HEK293T (cell line): ENCODE measurements at regions of chr6 and their contacts with region 1.

Region 1: GRCh38 chr6:26156076-26156849 is 69.0 kb downstream of the HFE start:
- DNase-seq: peak; percentile 88

Region 2: DNA sequence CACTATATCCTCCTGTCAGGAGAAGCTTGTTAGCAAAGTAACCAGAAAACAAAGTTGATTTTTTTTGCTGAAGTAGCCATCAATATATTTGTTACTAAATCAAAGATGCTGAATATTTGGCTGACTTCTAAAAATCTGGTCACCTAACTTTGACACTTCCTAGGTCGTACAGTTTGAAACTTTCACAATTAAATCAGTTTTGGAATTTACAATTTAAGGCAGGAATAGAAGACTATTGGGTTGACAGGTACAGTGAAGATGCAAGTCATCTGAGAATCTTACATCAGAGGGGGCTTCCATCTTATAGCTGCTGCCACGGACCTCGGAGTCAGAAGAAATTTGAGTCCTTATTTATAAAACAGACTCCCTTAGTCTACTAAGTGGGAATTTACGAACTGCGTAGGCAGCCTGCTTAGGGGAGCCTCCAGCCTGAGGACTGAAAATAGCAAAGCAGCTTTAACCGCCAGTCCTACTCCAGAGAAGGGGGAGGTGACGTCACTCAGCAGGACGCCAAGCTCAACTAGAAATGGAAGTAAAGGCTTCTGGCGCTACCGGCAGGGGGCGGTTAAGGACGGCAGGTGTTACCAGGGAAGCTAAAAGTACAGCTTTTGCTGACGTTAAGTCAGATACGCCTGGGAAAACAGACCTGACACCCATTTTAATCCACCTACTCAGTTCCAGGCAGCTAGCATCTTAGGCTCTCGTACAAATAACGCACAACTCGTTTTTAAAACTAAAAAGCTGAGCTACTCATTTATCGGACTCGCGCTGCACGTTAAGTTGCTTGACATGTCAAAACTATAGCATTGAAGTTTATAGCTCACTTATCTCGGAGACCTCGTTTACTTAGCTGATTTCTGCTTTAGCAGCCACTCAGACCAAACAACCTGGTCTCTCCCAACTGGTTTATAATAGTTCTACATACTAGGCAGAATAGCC is 130.1 kb before region 1 on chr6:
- CTCF ChIA-PET with region 1: no interaction called
- POLR2A ChIA-PET with region 1: interaction called, 243 read pairs
- DNase-seq: peak; percentile 55

Region 3: DNA sequence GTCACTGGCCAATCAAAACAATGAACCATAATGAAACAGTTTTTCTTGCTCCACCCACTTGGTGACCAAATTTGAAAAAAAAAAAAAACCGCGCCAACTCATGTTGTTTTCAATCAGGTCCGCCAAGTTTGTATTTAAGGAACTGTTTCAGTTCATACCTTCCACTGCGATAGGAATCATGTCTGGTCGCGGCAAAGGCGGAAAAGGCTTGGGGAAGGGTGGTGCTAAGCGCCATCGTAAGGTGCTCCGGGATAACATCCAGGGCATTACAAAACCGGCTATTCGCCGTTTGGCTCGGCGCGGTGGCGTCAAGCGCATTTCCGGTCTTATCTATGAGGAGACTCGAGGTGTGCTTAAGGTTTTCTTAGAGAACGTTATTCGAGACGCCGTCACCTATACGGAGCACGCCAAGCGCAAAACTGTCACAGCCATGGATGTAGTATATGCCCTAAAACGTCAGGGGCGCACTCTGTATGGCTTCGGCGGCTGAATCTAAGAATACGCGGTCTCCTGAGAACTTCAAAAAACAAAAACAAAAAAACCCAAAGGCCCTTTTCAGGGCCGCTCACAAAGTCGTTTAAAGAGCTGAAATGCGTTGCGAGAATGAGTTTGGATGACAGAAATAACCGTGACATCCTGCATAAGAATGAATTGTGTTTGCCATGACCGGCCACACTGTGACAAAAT is 52.4 kb before region 1 on chr6:
- CTCF ChIA-PET with region 1: no interaction called
- POLR2A ChIA-PET with region 1: interaction called, 59 read pairs
- DNase-seq: peak; percentile 70

Region 4: GRCh38 chr6:26141378-26141904 is 14.8 kb before region 1 on chr6:
- CTCF ChIA-PET with region 1: no interaction called
- POLR2A ChIA-PET with region 1: interaction called, 47 read pairs
- DNase-seq: no peak

Region 5: GRCh38 chr6:26204332-26205165 is 48.3 kb after region 1 on chr6:
- CTCF ChIA-PET with region 1: no interaction called
- POLR2A ChIA-PET with region 1: interaction called, 121 read pairs
- DNase-seq: peak; percentile 86

Region 6: DNA sequence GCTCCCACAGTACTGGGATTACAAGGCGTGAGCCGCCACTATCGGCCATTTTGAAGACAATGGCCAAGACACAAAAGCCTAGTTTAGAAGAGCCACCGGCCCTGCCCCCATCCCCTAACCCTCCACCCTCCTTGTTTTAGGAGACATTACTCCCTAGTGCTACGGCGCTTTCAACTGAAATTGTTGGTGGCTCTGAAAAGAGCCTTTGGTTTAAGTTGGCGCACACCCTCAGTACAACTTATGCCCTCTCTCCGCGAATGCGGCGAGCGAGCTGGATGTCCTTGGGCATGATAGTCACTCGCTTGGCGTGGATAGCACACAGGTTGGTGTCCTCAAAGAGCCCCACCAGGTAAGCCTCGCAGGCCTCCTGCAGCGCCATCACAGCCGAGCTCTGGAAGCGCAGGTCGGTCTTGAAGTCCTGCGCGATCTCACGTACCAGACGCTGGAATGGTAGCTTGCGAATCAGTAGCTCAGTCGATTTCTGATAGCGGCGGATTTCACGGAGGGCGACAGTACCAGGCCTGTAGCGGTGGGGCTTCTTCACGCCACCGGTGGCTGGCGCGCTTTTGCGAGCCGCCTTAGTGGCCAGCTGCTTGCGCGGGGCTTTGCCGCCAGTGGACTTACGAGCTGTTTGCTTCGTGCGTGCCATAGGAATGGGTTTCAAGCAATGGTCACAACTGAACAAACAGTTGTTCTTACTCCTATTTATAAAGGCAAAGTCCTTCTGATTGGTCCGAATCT is 93.9 kb after region 1 on chr6:
- CTCF ChIA-PET with region 1: no interaction called
- POLR2A ChIA-PET with region 1: interaction called, 22 read pairs
- DNase-seq: no peak

Region 7: GRCh38 chr6:26445934-26446667 is 289.8 kb after region 1 on chr6:
- CTCF ChIA-PET with region 1: no interaction called
- POLR2A ChIA-PET with region 1: no interaction called
- DNase-seq: no peak

Region 8: DNA sequence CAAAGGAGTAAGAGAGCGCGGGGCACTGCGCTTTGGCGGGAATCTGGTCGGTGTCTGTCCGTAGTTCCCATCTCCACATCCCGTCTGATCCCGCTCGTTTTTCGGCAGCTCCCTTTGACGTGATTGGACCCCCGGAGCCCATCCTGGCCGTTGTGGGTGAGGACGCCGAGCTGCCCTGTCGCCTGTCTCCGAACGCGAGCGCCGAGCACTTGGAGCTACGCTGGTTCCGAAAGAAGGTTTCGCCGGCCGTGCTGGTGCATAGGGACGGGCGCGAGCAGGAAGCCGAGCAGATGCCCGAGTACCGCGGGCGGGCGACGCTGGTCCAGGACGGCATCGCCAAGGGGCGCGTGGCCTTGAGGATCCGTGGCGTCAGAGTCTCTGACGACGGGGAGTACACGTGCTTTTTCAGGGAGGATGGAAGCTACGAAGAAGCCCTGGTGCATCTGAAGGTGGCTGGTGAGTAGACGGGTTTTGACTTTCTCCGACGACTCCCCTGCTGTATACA is 345.3 kb after region 1 on chr6:
- CTCF ChIA-PET with region 1: no interaction called
- POLR2A ChIA-PET with region 1: no interaction called
- DNase-seq: no peak

Region 9: DNA sequence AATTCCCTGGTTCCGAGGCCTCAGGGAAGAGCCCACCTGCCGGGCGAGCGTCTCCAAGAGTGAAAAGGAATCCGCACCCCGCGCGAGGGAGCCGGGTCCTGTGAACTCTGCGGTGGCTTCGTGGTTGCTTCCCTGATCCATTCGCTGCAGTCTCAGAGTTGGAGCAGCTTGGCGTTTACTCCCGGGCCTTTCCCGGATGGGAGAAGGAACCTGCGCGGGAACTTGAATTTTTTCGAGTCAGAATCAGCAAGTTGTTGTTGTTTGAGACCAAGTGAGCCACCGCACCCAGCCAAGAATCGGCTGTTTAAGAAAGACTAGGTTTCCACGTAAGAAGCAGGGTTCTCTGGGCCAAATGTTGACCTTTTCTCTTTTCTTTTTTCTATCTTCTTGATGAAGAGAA is 1104.1 kb after region 1 on chr6:
- CTCF ChIA-PET with region 1: no interaction called
- POLR2A ChIA-PET with region 1: no interaction called
- DNase-seq: no peak

Region 10: DNA sequence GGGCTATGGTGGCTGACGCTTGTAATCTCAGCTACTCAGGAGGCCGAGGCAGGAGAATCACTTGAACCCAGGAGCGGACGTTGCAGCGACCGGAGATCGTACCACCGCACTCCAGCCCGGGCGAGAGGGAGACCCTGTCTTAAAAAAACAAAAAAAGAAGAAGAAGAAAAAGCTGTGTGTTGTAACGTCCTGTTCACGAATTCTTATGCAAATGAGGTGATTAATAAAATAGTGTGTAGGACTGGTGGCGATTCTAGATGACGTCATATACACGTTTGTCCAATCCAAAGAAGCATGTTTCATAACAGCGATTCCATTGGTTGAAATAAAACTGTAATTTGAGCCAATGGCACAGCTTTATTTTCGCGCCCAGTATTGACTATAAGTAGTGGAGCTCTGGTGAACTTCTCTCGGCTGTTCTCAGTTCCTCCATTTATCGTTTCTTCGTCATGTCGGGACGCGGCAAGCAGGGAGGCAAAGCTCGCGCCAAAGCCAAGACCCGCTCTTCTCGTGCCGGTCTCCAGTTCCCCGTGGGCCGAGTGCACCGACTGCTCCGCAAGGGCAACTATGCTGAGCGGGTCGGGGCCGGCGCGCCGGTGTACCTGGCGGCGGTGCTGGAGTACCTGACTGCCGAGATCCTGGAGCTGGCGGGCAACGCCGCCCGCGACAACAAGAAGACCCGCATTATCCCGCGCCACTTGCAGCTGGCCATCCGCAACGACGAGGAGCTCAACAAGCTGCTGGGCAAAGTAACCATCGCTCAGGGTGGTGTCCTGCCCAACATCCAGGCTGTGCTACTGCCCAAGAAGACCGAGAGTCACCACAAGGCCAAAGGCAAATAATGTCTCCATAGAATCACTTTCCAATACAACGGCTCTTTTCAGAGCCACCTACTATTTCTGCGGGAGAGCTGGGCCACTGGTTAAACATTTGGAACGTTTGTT is 1708.9 kb after region 1 on chr6:
- CTCF ChIA-PET with region 1: no interaction called
- POLR2A ChIA-PET with region 1: interaction called, 10 read pairs
- DNase-seq: peak; percentile 80